K562 (cell line): ENCODE measurements at regions of chr5 and their contacts with region 1.

Region 1: GRCh38 chr5:86570427-86571083 is 47.2 kb upstream of the COX7C start:
- DNase-seq: peak; percentile 44 to 83 (median 52)
- ATAC-seq: peak; percentile 98
- H3K4me3 ChIP-seq: peak overlapping the region; percentile 56
- H3K27ac ChIP-seq: peak overlapping the region; percentile 71
- H3K4me1 ChIP-seq: peaks cover 9 to 12% of the 10 kb centered on the region in 2 experiments
- H3K27me3 ChIP-seq: no peaks in the 10 kb centered on the region
- CTCF ChIP-seq: 0 out of 6 replicates have a peak, but pooled peaks of 1 of the 3 experiments have one; percentile 22
- EP300 ChIP-seq: no peak
- POLR2A ChIP-seq: peak; percentile 49
- RAD21 ChIP-seq: peak in 1 of 2 experiments; percentile 17; a peak in 1 of 4 replicates

Region 2: GRCh38 chr5:86507574-86507973 is 63.0 kb before region 1 on chr5:
- CTCF ChIA-PET with region 1: no interaction called
- POLR2A ChIA-PET with region 1: no interaction called
- in situ Hi-C with region 1: no loop called
- intact Hi-C with region 1: loop called (anchors 5 kb)
- DNase-seq: peak in 1 of 4 experiments; percentile 14
- ATAC-seq: no peak
- H3K4me3 ChIP-seq: no peak overlapping the region
- H3K27ac ChIP-seq: no peak overlapping the region
- H3K4me1 ChIP-seq: peaks cover 4 to 19% of the 10 kb centered on the region in 2 experiments; a peak in 2 of 5 replicates
- H3K27me3 ChIP-seq: no peaks in the 10 kb centered on the region
- CTCF ChIP-seq: no peak
- EP300 ChIP-seq: no peak
- POLR2A ChIP-seq: no peak
- RAD21 ChIP-seq: no peak

Region 3: GRCh38 chr5:86526811-86527348 is 43.7 kb before region 1 on chr5:
- CTCF ChIA-PET with region 1: no interaction called
- POLR2A ChIA-PET with region 1: interaction called, 3 read pairs
- in situ Hi-C with region 1: no loop called
- intact Hi-C with region 1: loop called (anchors 2 kb)
- DNase-seq: peak; percentile 44 to 94 (median 64)
- ATAC-seq: peak; percentile 100
- H3K4me3 ChIP-seq: no peak overlapping the region
- H3K27ac ChIP-seq: peak overlapping the region; percentile 48; the same call in 2 of the 3 replicates
- H3K4me1 ChIP-seq: peaks cover 7 to 27% of the 10 kb centered on the region in 2 experiments; a peak in 3 of 5 replicates
- H3K27me3 ChIP-seq: no peaks in the 10 kb centered on the region
- CTCF ChIP-seq: no peak
- EP300 ChIP-seq: peak; percentile 98
- POLR2A ChIP-seq: no peak
- RAD21 ChIP-seq: no peak; a peak in 2 of 4 replicates

Region 4: DNA sequence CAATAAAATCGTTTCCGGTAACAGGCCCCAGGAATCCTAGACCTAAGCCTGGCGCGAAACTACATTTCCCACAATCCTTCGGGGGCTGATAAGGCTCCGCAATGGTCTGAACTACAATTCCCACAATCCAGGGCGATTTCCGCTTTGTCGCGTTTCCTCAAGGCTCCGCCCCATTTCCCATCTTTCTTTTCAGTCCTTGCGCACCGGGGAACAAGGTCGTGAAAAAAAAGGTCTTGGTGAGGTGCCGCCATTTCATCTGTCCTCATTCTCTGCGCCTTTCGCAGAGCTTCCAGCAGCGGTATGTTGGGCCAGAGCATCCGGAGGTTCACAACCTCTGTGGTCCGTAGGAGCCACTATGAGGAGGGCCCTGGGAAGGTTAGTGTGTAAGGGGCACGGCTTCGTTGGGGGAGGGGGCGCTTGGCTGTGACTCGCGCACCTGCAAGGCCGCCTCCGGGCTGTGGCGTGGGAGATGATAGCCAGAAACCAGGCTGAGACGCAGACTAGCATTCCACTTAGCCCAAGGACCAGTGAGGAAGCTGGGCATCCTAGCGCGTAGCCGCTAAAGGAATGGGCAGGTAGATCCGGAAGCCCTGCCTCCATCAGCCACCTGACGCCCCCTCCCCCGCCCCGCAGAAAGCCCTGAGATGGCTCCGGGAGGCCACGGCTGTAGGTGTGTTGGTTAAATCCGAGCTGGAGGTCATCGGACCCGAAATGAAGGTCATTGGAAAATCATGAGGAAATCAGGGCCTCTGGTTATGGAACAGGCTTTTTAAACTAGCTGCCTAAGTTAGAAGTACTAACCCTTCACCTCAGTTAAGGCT is 47.4 kb after region 1 on chr5 and contains the start of gene COX7C:
- CTCF ChIA-PET with region 1: no interaction called
- POLR2A ChIA-PET with region 1: no interaction called
- in situ Hi-C with region 1: no loop called
- intact Hi-C with region 1: loop called (anchors 5 kb)
- DNase-seq: peak; percentile 82 to 98 (median 87)
- ATAC-seq: peak; percentile 92
- H3K4me3 ChIP-seq: peak within 1 kb of the TSS; percentile 81
- H3K27ac ChIP-seq: peak within 1 kb of the TSS; percentile 91
- H3K4me1 ChIP-seq: peaks cover 0 to 6% of the 10 kb centered on the region in 2 experiments; a peak in 1 of 5 replicates
- H3K27me3 ChIP-seq: no peaks in the 10 kb centered on the region
- CTCF ChIP-seq: peak in 1 of 3 experiments; percentile 3; a peak in 1 of 6 replicates
- EP300 ChIP-seq: peak; percentile 52
- POLR2A ChIP-seq: peak; percentile 96
- RAD21 ChIP-seq: no peak
- polyA plus RNA-seq, gene COX7C: 1,621 to 1,783 TPM